Endothelial cell of umbilical vein (primary cell): ENCODE measurements at regions of chr12 and their contacts with region 1.

Region 1: GRCh38 chr12:38906482-38907170 is 1.2 kb upstream of the CPNE8 start:
- DNase-seq: peak; percentile 84
- H3K4me3 ChIP-seq: peak overlapping the region; percentile 64 to 76 (median 70)
- H3K27ac ChIP-seq: peak overlapping the region; percentile 11
- H3K4me1 ChIP-seq: peaks cover 19% of the 10 kb centered on the region
- H3K27me3 ChIP-seq: no peaks in the 10 kb centered on the region
- CTCF ChIP-seq: peak; percentile 95 to 98
- POLR2A ChIP-seq: no peak

Region 2: GRCh38 chr12:38316391-38317129 is 590.1 kb before region 1 on chr12 and contains the start of gene ALG10B:
- CTCF ChIA-PET with region 1: interaction called, 3 read pairs
- POLR2A ChIA-PET with region 1: no interaction called
- dilution Hi-C with region 1: no loop called
- intact Hi-C with region 1: loop called (anchors 5 kb)
- DNase-seq: peak; percentile 96
- H3K4me3 ChIP-seq: peak within 1 kb of the TSS; percentile 68 to 88 (median 87)
- H3K27ac ChIP-seq: peak within 1 kb of the TSS; percentile 99
- H3K4me1 ChIP-seq: peaks cover 7% of the 10 kb centered on the region
- H3K27me3 ChIP-seq: no peaks in the 10 kb centered on the region
- CTCF ChIP-seq: peak; percentile 50 to 56
- POLR2A ChIP-seq: peak; percentile 83
- total RNA-seq, gene ALG10B: 6.3 and 9.0 TPM in 2 replicates

Region 3: DNA sequence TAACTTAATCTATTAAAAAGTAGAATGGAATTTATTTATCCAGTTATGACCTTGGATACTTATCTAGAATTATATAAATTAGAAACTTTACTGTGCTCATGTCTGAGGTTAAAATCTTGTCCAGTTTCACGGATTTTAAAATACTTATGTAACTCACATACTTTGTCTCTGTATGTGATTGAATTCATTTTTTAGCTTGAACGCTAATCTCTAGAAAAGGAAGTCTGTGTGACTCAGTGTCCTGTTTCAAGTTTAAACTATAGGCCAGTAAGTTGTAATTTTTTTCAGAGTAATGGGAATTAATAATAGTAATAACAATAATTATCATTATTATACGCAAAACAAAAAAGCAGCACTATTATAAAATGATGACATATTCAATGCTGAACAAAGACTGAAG is 169.8 kb before region 1 on chr12:
- CTCF ChIA-PET with region 1: interaction called, 10 read pairs
- POLR2A ChIA-PET with region 1: no interaction called
- dilution Hi-C with region 1: no loop called
- intact Hi-C with region 1: loop called (anchors 2 kb)
- DNase-seq: peak; percentile 75
- H3K4me3 ChIP-seq: peak overlapping the region in 1 of 3 experiments; percentile 40
- H3K27ac ChIP-seq: peak overlapping the region; percentile 34
- H3K4me1 ChIP-seq: peaks cover 14% of the 10 kb centered on the region
- H3K27me3 ChIP-seq: no peaks in the 10 kb centered on the region
- CTCF ChIP-seq: no peak
- POLR2A ChIP-seq: no peak

Region 4: GRCh38 chr12:39103552-39104165 is 197.0 kb after region 1 on chr12:
- CTCF ChIA-PET with region 1: interaction called, 12 read pairs
- POLR2A ChIA-PET with region 1: no interaction called
- dilution Hi-C with region 1: no loop called
- intact Hi-C with region 1: no loop called
- DNase-seq: peak; percentile 53
- H3K4me3 ChIP-seq: no peak overlapping the region
- H3K27ac ChIP-seq: no peak overlapping the region
- H3K4me1 ChIP-seq: no peaks in the 10 kb centered on the region
- H3K27me3 ChIP-seq: peaks cover 0 to 2% of the 10 kb centered on the region in 2 experiments
- CTCF ChIP-seq: peak; percentile 56 to 68
- POLR2A ChIP-seq: no peak

Region 5: GRCh38 chr12:39443081-39443928 is 536.7 kb after region 1 on chr12 and contains the start of gene KIF21A:
- CTCF ChIA-PET with region 1: no interaction called
- POLR2A ChIA-PET with region 1: no interaction called
- dilution Hi-C with region 1: no loop called
- intact Hi-C with region 1: loop called (anchors 5 kb)
- DNase-seq: peak; percentile 94
- H3K4me3 ChIP-seq: peak within 1 kb of the TSS; percentile 78 to 87 (median 84)
- H3K27ac ChIP-seq: peak within 1 kb of the TSS; percentile 71
- H3K4me1 ChIP-seq: peaks cover 12% of the 10 kb centered on the region
- H3K27me3 ChIP-seq: peaks cover 2% of the 10 kb centered on the region in 2 experiments
- CTCF ChIP-seq: peak; percentile 43 to 65
- POLR2A ChIP-seq: peak; percentile 71
- total RNA-seq, gene KIF21A: 9.6 and 10.1 TPM in 2 replicates